Activated CD8-positive, alpha-beta T cell treated with anti-CD3 and anti-CD28 coated beads, Interleukin-2, amount 10 ng/mL, durations not matched to agents 7 days and 5 days (primary cell): ENCODE measurements at regions of chr14 and their contacts with region 1.

Region 1: GRCh38 chr14:77457522-77458290 is at the starts of genes AHSA1 and VIPAS39:
- DNase-seq: peak; percentile 98
- ATAC-seq: peak; percentile 92
- H3K4me3 Mint-ChIP-seq: peak within 1 kb of the TSS; percentile 100
- H3K27ac Mint-ChIP-seq: peak within 1 kb of the TSS; percentile 100
- H3K4me1 Mint-ChIP-seq: peaks cover 26% of the 10 kb centered on the region
- H3K27me3 Mint-ChIP-seq: no peaks in the 10 kb centered on the region
- total RNA-seq, gene AHSA1: 252 to 273 TPM
- total RNA-seq, gene VIPAS39: 18.4 to 19.3 TPM

Region 2: GRCh38 chr14:77086017-77086736 is 371.5 kb before region 1 on chr14:
- CTCF ChIA-PET with region 1: no interaction called
- POLR2A ChIA-PET with region 1: no interaction called
- DNase-seq: no peak
- ATAC-seq: peak; percentile 49
- H3K4me3 Mint-ChIP-seq: no peak overlapping the region
- H3K27ac Mint-ChIP-seq: no peak overlapping the region
- H3K4me1 Mint-ChIP-seq: peaks cover 4% of the 10 kb centered on the region
- H3K27me3 Mint-ChIP-seq: peaks cover 6% of the 10 kb centered on the region

Region 3: GRCh38 chr14:77339407-77339806 is 118.3 kb before region 1 on chr14:
- CTCF ChIA-PET with region 1: no interaction called
- POLR2A ChIA-PET with region 1: no interaction called
- DNase-seq: no peak
- ATAC-seq: no peak
- H3K4me3 Mint-ChIP-seq: no peak overlapping the region
- H3K27ac Mint-ChIP-seq: no peak overlapping the region
- H3K4me1 Mint-ChIP-seq: peaks cover 6% of the 10 kb centered on the region
- H3K27me3 Mint-ChIP-seq: no peaks in the 10 kb centered on the region

Region 4: DNA sequence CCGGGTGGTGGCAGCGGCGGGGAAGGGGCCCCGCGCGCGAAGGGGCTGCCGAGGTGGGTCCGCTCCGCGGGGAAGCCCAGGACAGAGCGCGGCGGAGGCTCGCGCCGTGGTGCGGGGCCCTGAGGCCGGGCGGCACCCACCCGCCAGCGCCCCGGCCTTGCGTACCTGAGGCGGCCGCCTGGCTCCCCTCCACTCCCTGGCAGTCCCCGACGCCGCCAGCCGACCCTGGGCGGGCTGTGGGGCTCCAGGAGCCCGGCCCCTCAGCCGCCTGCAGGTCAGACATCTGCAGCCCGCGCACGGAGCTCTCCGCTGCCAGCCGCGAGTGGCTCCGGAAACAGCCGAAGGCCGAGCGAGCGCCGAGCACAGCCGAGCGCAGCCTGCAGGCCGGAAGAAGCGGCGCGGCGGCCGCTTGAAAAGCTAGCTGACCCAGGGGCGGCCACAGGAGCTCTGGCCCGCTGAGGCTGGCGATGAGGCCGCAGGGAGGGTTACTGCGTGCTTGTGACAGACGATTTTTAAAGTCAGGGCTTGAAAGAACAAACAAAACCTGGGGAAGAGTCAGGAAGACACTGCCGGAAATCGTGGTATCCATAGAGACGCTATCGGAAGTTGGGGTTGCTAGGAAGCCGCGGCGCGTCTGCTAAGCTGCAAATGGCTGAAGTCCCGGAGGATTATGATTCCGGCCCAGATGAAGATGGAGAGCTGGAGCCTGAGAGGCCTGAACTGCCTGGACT is 80.8 kb before region 1 on chr14 and contains the starts of genes SAMD15 and TMED8:
- CTCF ChIA-PET with region 1: interaction called, 11 read pairs
- POLR2A ChIA-PET with region 1: interaction called, 5 read pairs
- DNase-seq: peak; percentile 87
- ATAC-seq: peak; percentile 98
- H3K4me3 Mint-ChIP-seq: peak within 1 kb of the TSS; percentile 89
- H3K27ac Mint-ChIP-seq: peak within 1 kb of the TSS; percentile 92
- H3K4me1 Mint-ChIP-seq: peaks cover 38% of the 10 kb centered on the region
- H3K27me3 Mint-ChIP-seq: peaks cover 5% of the 10 kb centered on the region
- total RNA-seq, gene SAMD15: 0.23 to 0.40 TPM
- total RNA-seq, gene TMED8: 16.7 to 17.1 TPM

Region 5: GRCh38 chr14:77478796-77479195 is 21.1 kb after region 1 on chr14:
- CTCF ChIA-PET with region 1: interaction called, 10 read pairs
- POLR2A ChIA-PET with region 1: no interaction called
- DNase-seq: no peak
- ATAC-seq: no peak
- H3K4me3 Mint-ChIP-seq: no peak overlapping the region
- H3K27ac Mint-ChIP-seq: no peak overlapping the region
- H3K4me1 Mint-ChIP-seq: no peaks in the 10 kb centered on the region
- H3K27me3 Mint-ChIP-seq: no peaks in the 10 kb centered on the region

Region 6: GRCh38 chr14:77508249-77508648 is 50.5 kb after region 1 on chr14:
- CTCF ChIA-PET with region 1: no interaction called
- POLR2A ChIA-PET with region 1: no interaction called
- DNase-seq: no peak
- ATAC-seq: no peak
- H3K4me3 Mint-ChIP-seq: no peak overlapping the region
- H3K27ac Mint-ChIP-seq: no peak overlapping the region
- H3K4me1 Mint-ChIP-seq: no peaks in the 10 kb centered on the region
- H3K27me3 Mint-ChIP-seq: no peaks in the 10 kb centered on the region

Region 7: GRCh38 chr14:77554207-77554606 is 96.5 kb after region 1 on chr14:
- CTCF ChIA-PET with region 1: interaction called, 48 read pairs
- POLR2A ChIA-PET with region 1: no interaction called
- DNase-seq: peak; percentile 34
- ATAC-seq: peak; percentile 67
- H3K4me3 Mint-ChIP-seq: peak overlapping the region; percentile 50
- H3K27ac Mint-ChIP-seq: peak overlapping the region; percentile 82
- H3K4me1 Mint-ChIP-seq: peaks cover 33% of the 10 kb centered on the region
- H3K27me3 Mint-ChIP-seq: no peaks in the 10 kb centered on the region

Region 8: DNA sequence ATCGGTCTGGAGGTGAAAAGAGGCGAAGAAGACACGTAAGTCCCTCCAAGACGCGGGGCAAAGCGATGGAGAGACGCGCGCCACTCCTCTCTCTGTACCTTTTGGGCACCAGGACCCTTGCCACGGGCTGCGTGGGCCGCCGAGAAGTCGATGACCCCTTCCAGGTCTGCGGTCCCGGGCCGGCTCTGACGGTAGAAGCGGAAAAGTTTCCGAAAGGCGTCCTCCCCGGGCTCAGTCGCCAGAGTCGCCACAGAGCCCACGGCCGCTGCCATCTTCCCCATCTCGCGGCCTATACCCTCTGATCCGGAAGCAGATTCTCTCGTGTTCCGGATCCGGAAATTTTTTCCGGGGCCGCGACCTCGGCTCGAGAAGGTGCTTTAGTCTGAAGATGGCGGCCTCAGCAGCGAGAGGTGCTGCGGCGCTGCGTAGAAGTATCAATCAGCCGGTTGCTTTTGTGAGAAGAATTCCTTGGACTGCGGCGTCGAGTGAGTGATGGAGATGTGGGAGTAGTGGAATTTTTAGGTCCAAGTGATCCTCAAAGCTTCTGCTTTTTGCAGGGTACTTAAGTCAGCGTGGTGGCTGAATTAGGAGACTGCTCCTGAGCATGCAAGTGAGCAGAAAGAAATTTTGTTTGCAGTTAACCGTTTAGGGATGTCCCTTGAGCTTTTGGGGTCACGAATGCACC is 250.2 kb after region 1 on chr14 and contains the starts of genes ALKBH1 and SLIRP:
- CTCF ChIA-PET with region 1: interaction called, 24 read pairs
- POLR2A ChIA-PET with region 1: interaction called, 4 read pairs
- DNase-seq: peak; percentile 93
- ATAC-seq: peak; percentile 99
- H3K4me3 Mint-ChIP-seq: peak within 1 kb of the TSS; percentile 89
- H3K27ac Mint-ChIP-seq: peak within 1 kb of the TSS; percentile 90
- H3K4me1 Mint-ChIP-seq: peaks cover 28% of the 10 kb centered on the region
- H3K27me3 Mint-ChIP-seq: no peaks in the 10 kb centered on the region
- total RNA-seq, gene ALKBH1: 12.9 to 14.8 TPM
- total RNA-seq, gene SLIRP: 92.1 to 101 TPM